Head of caudate nucleus (tissue), 42 donors: ENCODE measurements at regions of chr4 and their contacts with region 1.

Region 1: GRCh38 chr4:38306482-38307071 is 346.4 kb downstream of the PTTG2 start:
- DNase-seq: peak in 2 of 42 donors; percentile 32 to 55

Region 2: GRCh38 chr4:38204339-38205035 is 102.1 kb before region 1 on chr4:
- intact Hi-C with region 1: loop called (anchors 10 kb)
- DNase-seq: peak in 28 of 42 donors; percentile 15 to 79 (median 52)